ENCODE measurements at regions of chr5 and their contacts with region 1.

Region 1: GRCh38 chr5:136037001-136037705 is 8.4 kb downstream of the TGFBI start:
- DNase-seq: no peak
- H3K4me3 ChIP-seq: no peak overlapping the region
- H3K27ac ChIP-seq: peak overlapping the region; percentile 63
- H3K4me1 ChIP-seq: peaks cover 73% of the 10 kb centered on the region
- H3K27me3 ChIP-seq: no peaks in the 10 kb centered on the region
- CTCF ChIP-seq: no peak

Region 2: DNA sequence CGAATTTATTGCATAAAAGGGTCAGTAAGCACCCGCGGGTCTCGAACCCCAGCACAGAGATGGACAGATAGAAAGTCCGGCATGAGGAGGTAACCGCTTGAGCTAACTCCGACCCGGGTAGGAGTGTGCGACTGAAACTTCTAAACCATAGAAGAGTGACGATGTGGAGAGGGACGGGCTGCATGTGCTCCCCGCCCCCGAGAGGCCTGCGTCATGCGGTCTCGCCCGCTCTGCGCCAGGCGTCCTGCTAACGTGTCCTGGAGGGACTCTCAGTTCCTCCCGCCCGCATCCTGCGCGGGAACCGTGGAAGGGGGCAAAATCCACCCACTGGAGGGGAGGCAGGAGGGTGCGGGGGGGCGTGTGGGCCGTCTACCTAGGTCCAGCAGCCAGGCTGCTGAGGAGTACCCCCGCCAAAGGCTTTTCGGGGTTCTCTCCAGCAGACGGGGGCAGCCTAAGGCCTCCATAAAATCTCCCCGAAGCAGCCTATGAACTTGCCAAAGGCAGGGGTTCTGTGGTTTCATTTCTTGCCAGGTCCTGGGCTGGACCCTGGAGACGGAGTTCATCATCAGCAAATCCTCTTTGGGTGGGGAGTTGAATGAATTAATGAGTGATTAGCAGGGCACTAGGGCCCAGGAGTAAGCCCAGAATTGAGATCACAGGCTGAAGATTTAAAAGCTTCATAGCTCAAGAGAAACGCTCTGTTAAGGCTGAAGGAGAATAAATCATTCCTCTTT is 43.5 kb after region 1 on chr5:
- intact Hi-C with region 1: loop called (anchors 10 kb)
- DNase-seq: peak; percentile 92
- H3K4me3 ChIP-seq: peak overlapping the region; percentile 65
- H3K27ac ChIP-seq: peak overlapping the region; percentile 91
- H3K4me1 ChIP-seq: peaks cover 53% of the 10 kb centered on the region
- H3K27me3 ChIP-seq: no peaks in the 10 kb centered on the region
- CTCF ChIP-seq: no peak